IMR-90 (cell line): ENCODE measurements at regions of chr6 and their contacts with region 1.

Region 1: GRCh38 chr6:30489081-30490025 is at the start of gene HLA-E:
- DNase-seq: peak; percentile 100
- ATAC-seq: peak; percentile 94
- H3K4me3 ChIP-seq: peak within 1 kb of the TSS; percentile 81
- H3K27ac ChIP-seq: peak within 1 kb of the TSS; percentile 84
- H3K4me1 ChIP-seq: peaks cover 11% of the 10 kb centered on the region
- H3K27me3 ChIP-seq: no peaks in the 10 kb centered on the region
- CTCF ChIP-seq: no peak
- POLR2A ChIP-seq: peak; percentile 99
- RAD21 ChIP-seq: no peak
- total RNA-seq, gene HLA-E: 84.8 and 85.8 TPM in 2 replicates

Region 2: GRCh38 chr6:30541515-30542403 is 52.4 kb after region 1 on chr6:
- CTCF ChIA-PET with region 1: interaction called, 33 read pairs
- POLR2A ChIA-PET with region 1: no interaction called
- dilution Hi-C with region 1: no loop called
- in situ Hi-C with region 1: loop called (anchors 5 kb)
- intact Hi-C with region 1: no loop called
- DNase-seq: peak; percentile 87
- ATAC-seq: peak; percentile 85
- H3K4me3 ChIP-seq: no peak overlapping the region; the same call in 1 of the 2 replicates
- H3K27ac ChIP-seq: no peak overlapping the region
- H3K4me1 ChIP-seq: no peaks in the 10 kb centered on the region
- H3K27me3 ChIP-seq: no peaks in the 10 kb centered on the region
- CTCF ChIP-seq: peak; percentile 91
- POLR2A ChIP-seq: no peak
- RAD21 ChIP-seq: peak; percentile 69

Region 3: GRCh38 chr6:31271641-31272357 is 782.4 kb after region 1 on chr6 and contains the start of gene HLA-C:
- CTCF ChIA-PET with region 1: no interaction called
- POLR2A ChIA-PET with region 1: no interaction called
- dilution Hi-C with region 1: no loop called
- in situ Hi-C with region 1: no loop called
- intact Hi-C with region 1: no loop called
- DNase-seq: peak; percentile 95
- ATAC-seq: peak; percentile 97
- H3K4me3 ChIP-seq: peak within 1 kb of the TSS; percentile 58
- H3K27ac ChIP-seq: peak within 1 kb of the TSS; percentile 44
- H3K4me1 ChIP-seq: no peaks in the 10 kb centered on the region; the same call in 1 of the 2 replicates
- H3K27me3 ChIP-seq: peaks cover 3% of the 10 kb centered on the region
- CTCF ChIP-seq: 0 out of 2 replicates have a peak, but pooled peaks have one; percentile 11
- POLR2A ChIP-seq: peak; percentile 64
- RAD21 ChIP-seq: no peak
- total RNA-seq, gene HLA-C: 8.8 and 10.6 TPM in 2 replicates